ENCODE measurements at regions of chr13 and their contacts with region 1.

Region 1: DNA sequence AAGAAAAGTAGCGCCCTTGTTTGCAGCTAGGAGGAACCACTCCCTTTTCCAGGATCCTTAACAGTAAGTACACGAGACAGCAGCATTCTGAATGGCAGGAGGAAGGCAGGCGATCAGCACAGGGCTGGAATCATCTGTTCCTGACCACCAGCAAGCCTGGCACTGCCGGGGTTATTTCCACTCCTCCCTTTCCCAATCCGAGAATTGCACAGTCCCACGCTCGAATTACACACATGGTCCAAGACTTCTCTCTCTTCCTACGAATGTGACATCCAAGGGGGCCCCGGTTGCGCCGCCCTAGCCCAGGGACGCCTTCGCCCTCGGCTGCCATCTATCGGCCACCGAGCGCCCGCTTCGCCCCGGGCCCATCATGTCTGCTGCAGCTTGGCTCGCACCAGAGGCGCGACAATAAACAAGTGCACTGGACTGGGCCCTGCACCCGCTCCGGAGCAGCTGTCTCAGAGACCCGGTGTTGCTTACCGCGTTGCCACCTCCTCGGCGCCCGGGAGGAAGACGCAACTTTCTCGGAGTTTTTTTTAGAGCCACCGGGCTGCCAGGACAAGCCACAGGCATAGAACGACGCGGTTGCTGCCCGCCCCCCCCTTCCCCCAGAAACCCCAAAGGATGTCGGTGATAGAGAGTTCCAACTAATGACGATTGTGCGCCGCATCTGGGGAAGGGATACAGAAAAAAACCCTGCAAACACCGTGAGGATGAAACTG is at the start of gene SLITRK5:
- DNase-seq: peak in 5 of 9 donors; percentile 18 to 60 (median 24)
- ATAC-seq: peak; percentile 90
- H3K4me3 ChIP-seq: peak within 1 kb of the TSS; percentile 30
- H3K4me3 Mint-ChIP-seq: peak within 1 kb of the TSS; percentile 61 to 87 (median 78)
- H3K27ac ChIP-seq: no peak within 1 kb of the TSS
- H3K27ac Mint-ChIP-seq: no peak within 1 kb of the TSS
- H3K4me1 ChIP-seq: no peaks in the 10 kb centered on the region
- H3K4me1 Mint-ChIP-seq: peaks cover 8 to 36% (median 23%) of the 10 kb centered on the region in 7 donors
- H3K27me3 ChIP-seq: peaks cover 5 to 28% of the 10 kb centered on the region in 2 donors
- H3K27me3 Mint-ChIP-seq: peaks cover 36 to 61% (median 53%) of the 10 kb centered on the region in 5 donors
- total RNA-seq, gene SLITRK5: 0.05 to 0.12 (median 0.05) TPM in 4 of 5 experiments, not detected in the other

Region 2: GRCh38 chr13:86870444-86870843 is 800.7 kb before region 1 on chr13:
- CTCF ChIA-PET with region 1: no interaction called
- POLR2A ChIA-PET with region 1: no interaction called
- intact Hi-C with region 1: loop called in 1 of 2 experiments (anchors 10 kb)
- DNase-seq: peak in 1 of 9 donors; percentile 5
- ATAC-seq: no peak
- H3K4me3 ChIP-seq: no peak overlapping the region
- H3K4me3 Mint-ChIP-seq: no peak overlapping the region
- H3K27ac ChIP-seq: no peak overlapping the region
- H3K27ac Mint-ChIP-seq: no peak overlapping the region
- H3K4me1 ChIP-seq: no peaks in the 10 kb centered on the region
- H3K4me1 Mint-ChIP-seq: no peaks in the 10 kb centered on the region
- H3K27me3 ChIP-seq: no peaks in the 10 kb centered on the region
- H3K27me3 Mint-ChIP-seq: no peaks in the 10 kb centered on the region

Region 3: DNA sequence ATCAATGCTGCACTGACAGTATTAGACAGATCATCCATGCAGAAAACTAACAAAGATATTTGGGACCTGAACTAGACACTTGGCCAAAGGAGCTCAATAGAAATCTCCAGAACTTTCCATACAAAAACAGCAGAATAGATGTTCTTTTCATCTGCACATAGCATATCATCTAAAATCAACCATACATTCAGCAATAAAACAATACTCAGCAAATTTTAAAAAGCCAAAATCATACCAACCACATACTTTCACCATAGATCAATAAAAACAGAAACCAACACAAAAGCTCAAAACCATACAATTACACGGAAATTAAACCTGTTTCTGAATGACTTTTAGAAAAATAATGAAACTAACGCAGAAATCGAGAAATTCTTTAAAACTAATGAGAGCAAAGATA is 592.6 kb after region 1 on chr13:
- CTCF ChIA-PET with region 1: no interaction called
- POLR2A ChIA-PET with region 1: no interaction called
- intact Hi-C with region 1: no loop called
- DNase-seq: no peak
- ATAC-seq: no peak
- H3K4me3 ChIP-seq: no peak overlapping the region
- H3K4me3 Mint-ChIP-seq: no peak overlapping the region
- H3K27ac ChIP-seq: no peak overlapping the region
- H3K27ac Mint-ChIP-seq: no peak overlapping the region
- H3K4me1 ChIP-seq: no peaks in the 10 kb centered on the region
- H3K4me1 Mint-ChIP-seq: no peaks in the 10 kb centered on the region
- H3K27me3 ChIP-seq: no peaks in the 10 kb centered on the region
- H3K27me3 Mint-ChIP-seq: no peaks in the 10 kb centered on the region

Region 4: GRCh38 chr13:89066868-89067466 is 1395.8 kb after region 1 on chr13:
- CTCF ChIA-PET with region 1: no interaction called
- POLR2A ChIA-PET with region 1: no interaction called
- intact Hi-C with region 1: loop called in 1 of 2 experiments (anchors 2 kb)
- DNase-seq: peak in 3 of 9 donors; percentile 1 to 52 (median 1)
- ATAC-seq: peak; percentile 57
- H3K4me3 ChIP-seq: no peak overlapping the region
- H3K4me3 Mint-ChIP-seq: no peak overlapping the region
- H3K27ac ChIP-seq: no peak overlapping the region
- H3K27ac Mint-ChIP-seq: no peak overlapping the region
- H3K4me1 ChIP-seq: no peaks in the 10 kb centered on the region
- H3K4me1 Mint-ChIP-seq: no peaks in the 10 kb centered on the region
- H3K27me3 ChIP-seq: no peaks in the 10 kb centered on the region
- H3K27me3 Mint-ChIP-seq: no peaks in the 10 kb centered on the region

Region 5: GRCh38 chr13:89310943-89311672 is 1639.9 kb after region 1 on chr13:
- CTCF ChIA-PET with region 1: no interaction called
- POLR2A ChIA-PET with region 1: no interaction called
- intact Hi-C with region 1: no loop called
- DNase-seq: no peak
- ATAC-seq: no peak
- H3K4me3 ChIP-seq: no peak overlapping the region
- H3K4me3 Mint-ChIP-seq: no peak overlapping the region
- H3K27ac ChIP-seq: no peak overlapping the region
- H3K27ac Mint-ChIP-seq: no peak overlapping the region
- H3K4me1 ChIP-seq: no peaks in the 10 kb centered on the region
- H3K4me1 Mint-ChIP-seq: no peaks in the 10 kb centered on the region
- H3K27me3 ChIP-seq: no peaks in the 10 kb centered on the region
- H3K27me3 Mint-ChIP-seq: no peaks in the 10 kb centered on the region

Measured in naive thymus-derived CD4-positive, alpha-beta T cell (primary cell).